ENCODE measurements at regions of chr2 and their contacts with region 1.

Region 1: GRCh38 chr2:25951071-25951547 is 31.2 kb downstream of the KIF3C start:
- DNase-seq: peak; percentile 91
- H3K4me3 ChIP-seq: no peak overlapping the region; a peak in 1 of 4 replicates
- H3K27ac ChIP-seq: peak overlapping the region in 1 of 2 experiments; percentile 86; a peak in 2 of 4 replicates
- H3K4me1 ChIP-seq: peaks cover 5 to 7% of the 10 kb centered on the region in 2 experiments; a peak in 1 of 4 replicates
- H3K27me3 ChIP-seq: no peaks in the 10 kb centered on the region
- CTCF ChIP-seq: peak; percentile 99
- EP300 ChIP-seq: peak in 1 of 2 experiments; percentile 73; a peak in 1 of 4 replicates
- RAD21 ChIP-seq: peak; percentile 100

Region 2: DNA sequence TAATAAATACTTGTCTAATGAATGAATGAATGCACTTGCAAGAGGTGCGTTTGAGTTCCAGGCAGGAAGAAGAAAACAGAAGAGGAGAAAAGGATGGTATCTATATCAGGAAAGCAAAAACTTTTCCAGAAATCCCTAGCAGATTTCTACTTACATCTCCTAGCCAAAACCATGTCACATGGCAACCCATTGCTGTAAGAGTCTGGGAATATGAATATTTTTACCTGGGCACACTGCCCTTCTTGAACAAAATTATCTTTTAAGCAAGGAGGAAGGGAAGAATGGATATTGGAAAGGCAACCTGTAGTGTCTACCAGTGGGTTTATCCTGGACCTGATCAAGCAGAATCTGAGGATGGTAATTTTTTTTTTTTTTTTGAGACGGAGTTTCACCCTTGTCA is 28.6 kb before region 1 on chr2:
- CTCF ChIA-PET with region 1: no interaction called
- POLR2A ChIA-PET with region 1: no interaction called
- DNase-seq: no peak
- H3K4me3 ChIP-seq: no peak overlapping the region
- H3K27ac ChIP-seq: no peak overlapping the region
- H3K4me1 ChIP-seq: no peaks in the 10 kb centered on the region
- H3K27me3 ChIP-seq: no peaks in the 10 kb centered on the region
- CTCF ChIP-seq: no peak
- EP300 ChIP-seq: no peak
- RAD21 ChIP-seq: no peak

Region 3: GRCh38 chr2:25936889-25937545 is 14.1 kb before region 1 on chr2:
- CTCF ChIA-PET with region 1: interaction called, 53 read pairs
- POLR2A ChIA-PET with region 1: no interaction called
- DNase-seq: peak; percentile 56
- H3K4me3 ChIP-seq: no peak overlapping the region
- H3K27ac ChIP-seq: peak overlapping the region in 1 of 2 experiments; percentile 31; a peak in 2 of 4 replicates
- H3K4me1 ChIP-seq: peaks cover 0 to 6% of the 10 kb centered on the region in 2 experiments; a peak in 1 of 4 replicates
- H3K27me3 ChIP-seq: no peaks in the 10 kb centered on the region
- CTCF ChIP-seq: no peak
- EP300 ChIP-seq: peak in 1 of 2 experiments; percentile 62; a peak in 2 of 4 replicates
- RAD21 ChIP-seq: no peak

Region 4: DNA sequence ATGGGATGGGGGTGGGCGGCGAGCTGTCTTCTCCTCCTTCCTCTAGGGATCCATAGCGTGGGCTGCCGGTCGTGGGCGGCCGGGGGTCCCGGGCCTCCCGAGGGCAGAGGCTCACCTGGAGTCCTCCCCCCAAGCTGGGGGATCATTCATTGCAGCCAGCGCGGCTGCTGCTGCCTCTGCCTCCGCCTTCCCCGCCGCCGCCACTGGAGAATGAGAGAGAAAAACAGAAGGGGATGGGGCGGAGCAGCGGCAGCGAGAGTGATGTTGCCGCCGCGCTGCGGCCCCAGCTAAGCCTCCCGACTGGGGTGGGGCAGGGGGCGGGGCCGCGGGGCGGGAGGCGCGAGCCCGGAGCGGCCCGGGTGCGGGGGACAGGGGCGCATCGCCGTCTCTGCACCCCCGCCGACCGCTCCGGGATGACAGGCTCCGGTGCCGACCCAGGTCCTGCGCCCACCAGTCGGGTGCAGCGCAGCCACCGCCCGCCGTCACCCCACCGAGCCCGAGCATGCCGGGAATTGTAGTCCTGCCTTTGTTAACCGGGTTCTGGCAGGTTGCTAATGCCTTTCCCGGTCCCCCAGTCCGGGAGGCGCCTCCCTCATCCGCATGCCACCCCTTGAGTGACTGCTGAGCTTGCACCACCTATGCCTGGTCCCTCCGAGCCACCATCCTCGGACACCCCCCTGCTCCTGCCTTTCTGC is 31.3 kb after region 1 on chr2 and contains the start of gene KIF3C:
- CTCF ChIA-PET with region 1: interaction called, 51 read pairs
- POLR2A ChIA-PET with region 1: interaction called, 3 read pairs
- DNase-seq: peak; percentile 95
- H3K4me3 ChIP-seq: peak within 1 kb of the TSS; percentile 84 to 90
- H3K27ac ChIP-seq: peak within 1 kb of the TSS; percentile 40 to 87
- H3K4me1 ChIP-seq: peaks cover 38 to 47% of the 10 kb centered on the region in 2 experiments
- H3K27me3 ChIP-seq: no peaks in the 10 kb centered on the region
- CTCF ChIP-seq: 0 out of 2 replicates have a peak, but pooled peaks have one; percentile 0
- EP300 ChIP-seq: no peak
- RAD21 ChIP-seq: no peak
- polyA plus RNA-seq, gene KIF3C: 18.6 and 29.5 TPM in 2 replicates

Region 5: GRCh38 chr2:25991965-25992364 is 40.9 kb after region 1 on chr2:
- CTCF ChIA-PET with region 1: interaction called, 29 read pairs
- POLR2A ChIA-PET with region 1: no interaction called
- DNase-seq: no peak
- H3K4me3 ChIP-seq: no peak overlapping the region
- H3K27ac ChIP-seq: no peak overlapping the region
- H3K4me1 ChIP-seq: no peaks in the 10 kb centered on the region; a peak in 1 of 4 replicates
- H3K27me3 ChIP-seq: no peaks in the 10 kb centered on the region
- CTCF ChIP-seq: no peak
- EP300 ChIP-seq: no peak
- RAD21 ChIP-seq: no peak

Region 6: GRCh38 chr2:26136451-26136850 is 185.3 kb after region 1 on chr2:
- CTCF ChIA-PET with region 1: interaction called, 78 read pairs
- POLR2A ChIA-PET with region 1: no interaction called
- DNase-seq: no peak
- H3K4me3 ChIP-seq: no peak overlapping the region
- H3K27ac ChIP-seq: no peak overlapping the region
- H3K4me1 ChIP-seq: peaks cover 0 to 2% of the 10 kb centered on the region in 2 experiments; a peak in 1 of 4 replicates
- H3K27me3 ChIP-seq: no peaks in the 10 kb centered on the region
- CTCF ChIP-seq: no peak
- EP300 ChIP-seq: no peak
- RAD21 ChIP-seq: no peak

Measured in SK-N-SH (cell line).